ENCODE measurements at regions of chr5 and their contacts with region 1.

Region 1: GRCh38 chr5:112976432-112977309 is at the start of gene DCP2:
- DNase-seq: peak; percentile 95 to 97
- ATAC-seq: peak; percentile 96 to 99 (median 99)
- H3K4me3 ChIP-seq: peak within 1 kb of the TSS; percentile 82
- H3K27ac ChIP-seq: peak within 1 kb of the TSS; percentile 90
- H3K4me1 ChIP-seq: peaks cover 37% of the 10 kb centered on the region
- H3K27me3 ChIP-seq: no peaks in the 10 kb centered on the region
- CTCF ChIP-seq: no peak
- total RNA-seq, gene DCP2: 20.2 to 41.7 (median 29.9) TPM

Region 2: DNA sequence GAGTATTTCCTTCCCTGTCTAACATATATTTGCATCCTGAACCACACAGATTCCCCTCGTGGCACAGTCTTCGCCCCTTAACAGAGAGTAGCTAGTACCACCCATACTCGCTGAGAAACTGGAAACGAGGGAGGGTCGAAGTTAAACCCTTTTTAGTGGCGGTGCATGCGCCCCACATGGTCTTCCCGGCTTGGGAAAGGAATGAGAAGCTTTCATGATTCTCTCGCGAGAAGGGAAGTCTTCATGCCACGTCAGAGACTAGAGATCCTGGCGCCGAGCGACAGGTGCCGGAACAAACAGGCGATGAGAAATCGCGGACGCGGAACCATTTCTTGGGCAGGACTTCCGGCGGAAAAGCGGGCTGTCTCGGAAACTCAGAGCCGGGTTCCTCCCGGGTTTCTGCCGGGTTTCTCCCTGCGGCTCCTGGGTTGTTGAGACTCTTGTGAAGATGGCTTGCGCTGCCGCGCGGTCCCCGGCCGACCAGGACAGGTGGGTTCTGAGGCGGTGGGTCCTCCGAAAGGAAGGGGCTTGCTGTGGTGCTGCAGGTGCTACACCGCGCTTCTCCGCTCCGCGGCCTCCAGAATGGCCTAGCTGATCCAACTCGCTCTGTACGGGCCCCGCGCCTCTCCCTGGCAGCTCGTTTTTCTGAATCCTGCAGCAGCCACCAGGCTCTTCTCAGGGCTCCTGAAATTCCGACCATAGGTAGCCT is 115.6 kb before region 1 on chr5 and contains the start of gene SRP19:
- intact Hi-C with region 1: loop called in 1 of 2 experiments (anchors 5 kb)
- DNase-seq: peak; percentile 94 to 97
- ATAC-seq: peak; percentile 96 to 98 (median 97)
- H3K4me3 ChIP-seq: peak within 1 kb of the TSS; percentile 82
- H3K27ac ChIP-seq: peak within 1 kb of the TSS; percentile 77
- H3K4me1 ChIP-seq: peaks cover 23% of the 10 kb centered on the region
- H3K27me3 ChIP-seq: peaks cover 0 to 1% (median 0%) of the 10 kb centered on the region in 3 donors
- CTCF ChIP-seq: no peak
- total RNA-seq, gene SRP19: 32.9 to 44.5 (median 38.3) TPM